ENCODE measurements at regions of chr3 and their contacts with region 1.

Region 1: GRCh38 chr3:170811928-170812591 is 57.9 kb downstream of the RPL22L1 start:
- DNase-seq: peak; percentile 59 to 78
- H3K4me3 ChIP-seq: no peak overlapping the region
- H3K27ac ChIP-seq: no peak overlapping the region
- H3K4me1 ChIP-seq: peaks cover 4 to 19% (median 9%) of the 10 kb centered on the region in 4 experiments; a peak in 5 of 7 replicates
- H3K27me3 ChIP-seq: no peaks in the 10 kb centered on the region
- CTCF ChIP-seq: peak in 2 of 3 experiments; percentile 92 to 96; a peak in 3 of 4 replicates
- EP300 ChIP-seq: no peak
- POLR2A ChIP-seq: no peak
- RAD21 ChIP-seq: peak; percentile 88 to 94

Region 2: GRCh38 chr3:170414202-170414663 is 397.8 kb before region 1 on chr3:
- CTCF ChIA-PET with region 1: interaction called, 273 read pairs
- POLR2A ChIA-PET with region 1: interaction called, 3 read pairs
- DNase-seq: no peak
- H3K4me3 ChIP-seq: no peak overlapping the region
- H3K27ac ChIP-seq: no peak overlapping the region
- H3K4me1 ChIP-seq: peaks cover 0 to 5% (median 4%) of the 10 kb centered on the region in 4 experiments; a peak in 6 of 7 replicates
- H3K27me3 ChIP-seq: peaks cover 5 to 18% (median 16%) of the 10 kb centered on the region in 4 experiments
- CTCF ChIP-seq: peak; percentile 39 to 95 (median 94)
- EP300 ChIP-seq: no peak
- POLR2A ChIP-seq: no peak
- RAD21 ChIP-seq: peak; percentile 98 to 99

Region 3: GRCh38 chr3:170493712-170494182 is 318.3 kb before region 1 on chr3:
- CTCF ChIA-PET with region 1: interaction called, 42 read pairs
- POLR2A ChIA-PET with region 1: no interaction called
- DNase-seq: no peak
- H3K4me3 ChIP-seq: no peak overlapping the region
- H3K27ac ChIP-seq: no peak overlapping the region
- H3K4me1 ChIP-seq: peaks cover 0 to 3% (median 0%) of the 10 kb centered on the region in 4 experiments; a peak in 1 of 7 replicates
- H3K27me3 ChIP-seq: no peaks in the 10 kb centered on the region
- CTCF ChIP-seq: no peak
- EP300 ChIP-seq: no peak
- POLR2A ChIP-seq: no peak
- RAD21 ChIP-seq: no peak

Region 4: DNA sequence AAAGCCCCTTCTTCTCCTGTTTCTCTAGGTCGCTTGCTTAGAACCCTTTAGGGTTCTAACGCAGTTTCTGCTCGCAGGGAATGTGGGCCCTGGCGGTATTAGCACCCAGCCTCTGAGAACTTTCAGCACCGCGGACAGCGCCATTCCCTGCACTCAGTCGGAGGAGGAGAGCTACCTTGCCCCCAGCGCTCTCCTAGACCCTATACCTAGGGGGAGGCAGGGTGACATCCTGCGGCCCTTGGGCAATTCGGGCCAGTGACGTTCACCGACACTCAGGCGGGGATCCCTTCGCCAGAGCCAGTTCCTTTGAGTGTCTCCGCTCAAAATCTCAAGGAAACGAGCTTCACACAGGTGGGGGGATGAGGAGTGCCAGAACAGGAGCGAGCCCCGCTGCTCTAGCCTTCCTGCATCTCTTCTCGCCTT is 227.5 kb before region 1 on chr3:
- CTCF ChIA-PET with region 1: interaction called, 39 read pairs
- POLR2A ChIA-PET with region 1: no interaction called
- DNase-seq: peak in 1 of 2 experiments; percentile 96
- H3K4me3 ChIP-seq: peak overlapping the region; percentile 32 to 71 (median 60)
- H3K27ac ChIP-seq: no peak overlapping the region
- H3K4me1 ChIP-seq: peaks cover 0 to 7% (median 3%) of the 10 kb centered on the region in 4 experiments; a peak in 4 of 7 replicates
- H3K27me3 ChIP-seq: peaks cover 0 to 25% (median 21%) of the 10 kb centered on the region in 4 experiments; a peak in 6 of 7 replicates
- CTCF ChIP-seq: peak in 2 of 3 experiments; percentile 3 to 7; a peak in 1 of 4 replicates
- EP300 ChIP-seq: no peak
- POLR2A ChIP-seq: no peak
- RAD21 ChIP-seq: peak; percentile 31 to 34

Region 5: GRCh38 chr3:170829546-170830272 is 17.6 kb after region 1 on chr3:
- CTCF ChIA-PET with region 1: interaction called, 34 read pairs
- POLR2A ChIA-PET with region 1: interaction called, 4 read pairs
- DNase-seq: no peak
- H3K4me3 ChIP-seq: no peak overlapping the region
- H3K27ac ChIP-seq: no peak overlapping the region
- H3K4me1 ChIP-seq: peaks cover 2 to 20% (median 13%) of the 10 kb centered on the region in 4 experiments; a peak in 5 of 7 replicates
- H3K27me3 ChIP-seq: no peaks in the 10 kb centered on the region
- CTCF ChIP-seq: no peak
- EP300 ChIP-seq: no peak
- POLR2A ChIP-seq: no peak
- RAD21 ChIP-seq: no peak

Region 6: GRCh38 chr3:170862618-170863374 is 50.7 kb after region 1 on chr3:
- CTCF ChIA-PET with region 1: interaction called, 19 read pairs
- POLR2A ChIA-PET with region 1: interaction called, 10 read pairs
- DNase-seq: no peak
- H3K4me3 ChIP-seq: no peak overlapping the region
- H3K27ac ChIP-seq: no peak overlapping the region
- H3K4me1 ChIP-seq: peaks cover 0 to 2% (median 0%) of the 10 kb centered on the region in 4 experiments; a peak in 1 of 7 replicates
- H3K27me3 ChIP-seq: no peaks in the 10 kb centered on the region
- CTCF ChIP-seq: no peak
- EP300 ChIP-seq: no peak
- POLR2A ChIP-seq: no peak
- RAD21 ChIP-seq: no peak

Region 7: DNA sequence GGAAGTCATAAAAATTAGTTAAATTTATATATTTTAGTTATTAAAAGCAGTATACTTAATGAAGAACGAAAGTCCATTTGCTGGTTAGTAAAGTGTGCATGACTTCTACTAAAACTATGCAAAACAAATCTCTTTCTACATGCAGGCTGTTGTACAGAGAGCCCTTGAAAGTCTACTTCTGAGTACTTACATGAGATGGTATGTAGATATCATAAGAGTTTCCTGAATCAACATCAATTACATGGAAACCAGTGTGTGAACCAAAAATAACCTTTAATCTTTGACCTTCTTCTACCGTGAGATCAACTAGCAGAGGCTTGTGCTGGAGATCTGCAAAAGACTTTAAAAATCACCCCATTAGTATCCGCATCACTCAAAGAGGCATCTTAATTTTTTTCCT is 256.6 kb after region 1 on chr3:
- CTCF ChIA-PET with region 1: no interaction called
- POLR2A ChIA-PET with region 1: no interaction called
- DNase-seq: no peak
- H3K4me3 ChIP-seq: no peak overlapping the region
- H3K27ac ChIP-seq: no peak overlapping the region
- H3K4me1 ChIP-seq: no peaks in the 10 kb centered on the region
- H3K27me3 ChIP-seq: no peaks in the 10 kb centered on the region
- CTCF ChIP-seq: no peak
- EP300 ChIP-seq: no peak
- POLR2A ChIP-seq: no peak
- RAD21 ChIP-seq: no peak